Heart left ventricle (tissue), 16 donors: ENCODE measurements at regions of chr1 and their contacts with region 1.

Region 1: GRCh38 chr1:93672069-93672468 is 9.6 kb downstream of the BCAR3 start:
- DNase-seq: peak; percentile 72 to 91 (median 85)
- ATAC-seq: peak; percentile 49 to 75 (median 56)
- H3K4me3 ChIP-seq: no peak overlapping the region
- H3K27ac ChIP-seq: peak overlapping the region in 11 of 12 donors; percentile 12 to 77 (median 57)
- H3K4me1 ChIP-seq: peaks cover 17 to 98% (median 89%) of the 10 kb centered on the region in 12 donors
- H3K27me3 ChIP-seq: no peaks in the 10 kb centered on the region
- CTCF ChIP-seq: no peak
- POLR2A ChIP-seq: no peak

Region 2: DNA sequence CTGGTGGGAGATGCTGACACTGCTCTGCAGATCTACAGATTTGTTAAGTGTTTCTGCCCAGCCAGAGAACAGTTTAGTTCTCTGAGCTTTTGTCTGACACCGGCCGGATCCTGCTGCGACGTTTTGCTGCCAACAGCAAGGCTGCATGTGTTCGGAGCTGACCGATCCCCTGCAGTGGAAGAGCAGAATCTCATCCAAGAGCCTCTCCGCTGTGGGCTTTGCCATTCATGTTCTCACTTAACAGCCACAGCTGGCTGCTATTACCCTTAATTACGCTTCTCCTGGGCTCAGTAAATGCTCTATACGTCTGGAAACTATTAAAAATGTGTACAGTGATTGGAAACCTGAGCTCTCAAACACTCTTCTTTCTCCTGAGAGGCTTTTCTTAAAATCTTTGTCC is 95.7 kb before region 1 on chr1:
- intact Hi-C with region 1: loop called in 1 of 10 experiments (anchors 5 kb)
- DNase-seq: peak in 1 of 5 donors; percentile 43
- ATAC-seq: peak in 3 of 4 donors; percentile 32 to 59 (median 42)
- H3K4me3 ChIP-seq: no peak overlapping the region
- H3K27ac ChIP-seq: peak overlapping the region in 6 of 12 donors; percentile 26 to 73 (median 45)
- H3K4me1 ChIP-seq: peaks cover 0 to 61% (median 26%) of the 10 kb centered on the region in 12 donors
- H3K27me3 ChIP-seq: no peaks in the 10 kb centered on the region
- CTCF ChIP-seq: no peak
- POLR2A ChIP-seq: no peak

Region 3: GRCh38 chr1:93635614-93636543 is 36.2 kb before region 1 on chr1:
- intact Hi-C with region 1: loop called in 2 of 10 experiments (anchors 5 kb)
- DNase-seq: no peak
- ATAC-seq: peak; percentile 48 to 66 (median 56)
- H3K4me3 ChIP-seq: no peak overlapping the region
- H3K27ac ChIP-seq: peak overlapping the region in 10 of 12 donors; percentile 20 to 64 (median 40)
- H3K4me1 ChIP-seq: peaks cover 0 to 19% (median 10%) of the 10 kb centered on the region in 12 donors
- H3K27me3 ChIP-seq: no peaks in the 10 kb centered on the region
- CTCF ChIP-seq: no peak
- POLR2A ChIP-seq: no peak

Region 4: DNA sequence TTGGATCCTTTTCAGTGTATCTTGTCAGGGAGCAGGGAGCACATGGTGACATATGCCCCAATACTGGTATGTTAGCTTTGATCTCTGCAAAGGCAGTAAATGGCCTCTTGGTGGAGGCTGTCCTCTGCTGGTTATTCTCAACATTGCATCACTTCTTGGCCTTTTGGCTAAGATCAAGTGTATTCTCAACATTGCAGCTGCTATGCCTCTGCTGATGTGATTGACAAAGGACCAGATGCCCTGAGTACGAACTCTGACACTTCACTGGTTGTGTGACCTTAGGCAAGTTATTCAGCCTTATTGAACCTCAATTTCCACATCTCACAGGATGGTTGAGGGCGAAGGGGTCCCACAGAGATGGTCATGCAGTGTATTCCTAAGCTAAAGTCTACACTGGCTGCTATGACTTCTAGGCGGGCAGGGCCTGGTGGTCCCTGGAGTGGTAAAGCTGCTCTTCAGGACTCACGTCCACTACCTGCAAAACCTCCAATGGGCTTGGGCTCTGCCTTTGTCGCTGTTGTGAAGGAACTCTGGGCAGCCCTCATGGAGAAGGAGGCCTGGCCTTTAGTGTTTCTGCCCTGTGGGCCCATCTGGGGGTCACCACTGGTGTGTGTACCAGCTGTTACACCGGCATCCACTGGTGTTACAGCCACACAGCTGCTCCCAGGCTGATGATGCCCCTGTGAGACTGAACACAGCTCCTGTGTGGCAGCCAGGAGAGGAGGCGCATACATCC is 142.2 kb after region 1 on chr1:
- intact Hi-C with region 1: loop called in 1 of 10 experiments (anchors 5 kb)
- DNase-seq: peak in 4 of 5 donors; percentile 51 to 70 (median 59)
- ATAC-seq: peak; percentile 65 to 84 (median 77)
- H3K4me3 ChIP-seq: no peak overlapping the region
- H3K27ac ChIP-seq: no peak overlapping the region
- H3K4me1 ChIP-seq: peaks cover 0 to 57% (median 31%) of the 10 kb centered on the region in 12 donors
- H3K27me3 ChIP-seq: no peaks in the 10 kb centered on the region
- CTCF ChIP-seq: peak; percentile 94 to 100 (median 97)
- POLR2A ChIP-seq: no peak

Region 5: DNA sequence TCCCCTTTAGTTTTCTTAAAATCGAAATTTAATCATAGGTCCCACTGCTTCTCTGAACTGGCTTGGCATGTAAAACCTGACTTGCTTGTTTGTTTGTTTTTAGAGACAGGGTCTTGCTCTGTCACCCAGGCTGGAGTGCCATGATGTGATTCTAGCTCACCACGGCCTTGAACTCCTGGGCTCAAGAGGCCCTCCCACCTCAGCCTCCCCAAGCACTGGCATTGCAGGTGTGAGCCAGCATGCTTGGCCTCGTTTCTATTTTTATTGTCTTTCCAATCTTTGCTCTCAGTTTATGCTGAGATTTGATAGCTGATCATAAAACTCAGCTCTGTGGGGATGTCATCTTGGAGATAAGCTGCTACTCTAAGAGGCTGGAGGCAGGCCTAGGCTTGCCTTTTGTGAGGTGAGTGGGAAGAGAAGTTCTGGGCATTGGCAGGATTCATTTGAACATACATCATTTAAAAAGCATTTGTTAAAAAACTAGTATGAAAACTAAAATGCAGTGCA is 288.6 kb after region 1 on chr1:
- intact Hi-C with region 1: no loop called
- DNase-seq: no peak
- ATAC-seq: no peak
- H3K4me3 ChIP-seq: no peak overlapping the region
- H3K27ac ChIP-seq: no peak overlapping the region
- H3K4me1 ChIP-seq: no peaks in the 10 kb centered on the region
- H3K27me3 ChIP-seq: no peaks in the 10 kb centered on the region
- CTCF ChIP-seq: no peak
- POLR2A ChIP-seq: no peak